ENCODE measurements at regions of chr2 and their contacts with region 1.

Region 1: GRCh38 chr2:165522719-165523118 is 53.2 kb downstream of the CSRNP3 start:
- DNase-seq: no peak
- ATAC-seq: no peak
- H3K4me3 ChIP-seq: no peak overlapping the region
- H3K27ac ChIP-seq: no peak overlapping the region
- H3K4me1 ChIP-seq: no peaks in the 10 kb centered on the region
- H3K27me3 ChIP-seq: no peaks in the 10 kb centered on the region
- CTCF ChIP-seq: no peak
- POLR2A ChIP-seq: no peak

Region 2: GRCh38 chr2:165015052-165015642 is 507.6 kb before region 1 on chr2:
- intact Hi-C with region 1: no loop called
- DNase-seq: peak; percentile 50 to 68 (median 64)
- ATAC-seq: peak; percentile 42 to 69 (median 64)
- H3K4me3 ChIP-seq: no peak overlapping the region
- H3K27ac ChIP-seq: no peak overlapping the region
- H3K4me1 ChIP-seq: peaks cover 0 to 6% (median 0%) of the 10 kb centered on the region in 12 donors
- H3K27me3 ChIP-seq: peaks cover 0 to 8% (median 0%) of the 10 kb centered on the region in 9 donors
- CTCF ChIP-seq: peak; percentile 73 to 90 (median 86)
- POLR2A ChIP-seq: no peak

Region 3: DNA sequence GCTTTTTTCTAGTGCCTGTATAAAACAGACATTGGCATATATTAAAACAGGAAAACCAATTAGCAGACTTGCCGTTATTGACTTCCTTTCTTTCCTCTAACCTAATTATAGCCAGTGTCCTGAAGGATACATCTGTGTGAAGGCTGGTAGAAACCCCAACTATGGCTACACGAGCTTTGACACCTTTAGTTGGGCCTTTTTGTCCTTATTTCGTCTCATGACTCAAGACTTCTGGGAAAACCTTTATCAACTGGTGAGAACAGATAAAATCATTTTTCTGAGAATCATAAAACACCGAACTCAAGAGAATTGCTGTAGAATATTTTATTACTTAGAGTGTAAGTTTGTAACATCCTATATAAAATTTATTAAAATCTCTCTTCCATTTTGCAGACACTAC is 209.2 kb before region 1 on chr2:
- intact Hi-C with region 1: loop called in 1 of 10 experiments (anchors 5 kb)
- DNase-seq: no peak
- ATAC-seq: no peak
- H3K4me3 ChIP-seq: no peak overlapping the region
- H3K27ac ChIP-seq: no peak overlapping the region
- H3K4me1 ChIP-seq: no peaks in the 10 kb centered on the region
- H3K27me3 ChIP-seq: no peaks in the 10 kb centered on the region
- CTCF ChIP-seq: no peak
- POLR2A ChIP-seq: no peak

Region 4: GRCh38 chr2:165462443-165462842 is 60.3 kb before region 1 on chr2:
- intact Hi-C with region 1: no loop called
- DNase-seq: no peak
- ATAC-seq: no peak
- H3K4me3 ChIP-seq: no peak overlapping the region
- H3K27ac ChIP-seq: no peak overlapping the region
- H3K4me1 ChIP-seq: no peaks in the 10 kb centered on the region
- H3K27me3 ChIP-seq: no peaks in the 10 kb centered on the region
- CTCF ChIP-seq: no peak
- POLR2A ChIP-seq: no peak

Measured in heart left ventricle (tissue), 16 donors.